ENCODE measurements at regions of chr1 and their contacts with region 1.

Region 1: GRCh38 chr1:23916209-23917131 is 3.3 kb upstream of the CNR2 start:
- DNase-seq: no peak
- ATAC-seq: peak; percentile 56 to 78 (median 68)
- H3K4me3 ChIP-seq: no peak overlapping the region
- H3K27ac ChIP-seq: no peak overlapping the region
- H3K4me1 ChIP-seq: peaks cover 7% of the 10 kb centered on the region
- H3K27me3 ChIP-seq: no peaks in the 10 kb centered on the region
- CTCF ChIP-seq: peak; percentile 55

Region 2: DNA sequence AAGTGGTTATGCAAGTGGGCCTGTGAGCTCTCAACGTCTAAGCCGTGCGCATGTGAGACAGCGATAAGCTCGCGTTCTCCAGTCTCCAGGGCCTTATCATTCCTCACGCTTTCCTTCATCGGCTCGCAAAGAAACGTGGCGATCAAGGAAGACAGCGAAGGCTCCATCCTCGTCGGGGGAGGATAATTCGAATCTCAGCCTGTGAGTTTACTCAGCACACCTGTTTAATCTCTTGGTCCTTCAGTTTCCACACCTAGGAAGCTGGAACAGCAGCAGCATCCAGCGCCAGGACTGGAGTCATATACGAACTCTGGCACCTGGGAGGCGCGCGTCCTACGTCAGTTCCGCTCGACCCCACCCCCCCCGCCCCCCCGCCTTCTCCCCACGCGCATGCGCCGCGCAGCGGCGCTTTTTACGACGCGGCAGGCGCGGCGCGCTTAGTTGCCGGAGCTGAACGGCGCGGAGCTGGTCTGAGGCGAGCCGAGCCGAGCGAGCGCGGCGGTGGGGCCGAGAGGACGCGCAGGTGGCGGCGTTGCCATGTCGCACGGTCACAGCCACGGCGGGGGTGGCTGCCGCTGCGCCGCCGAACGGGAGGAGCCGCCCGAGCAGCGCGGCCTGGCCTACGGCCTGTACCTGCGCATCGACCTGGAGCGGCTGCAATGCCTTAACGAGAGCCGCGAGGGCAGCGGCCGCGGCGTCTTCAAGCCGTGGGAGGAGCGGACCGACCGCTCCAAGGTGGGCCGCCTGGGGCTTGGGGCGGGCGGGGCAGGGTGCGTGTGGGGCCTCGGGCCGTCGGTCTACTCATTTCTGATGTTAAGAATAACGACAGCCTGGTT is 138.3 kb before region 1 on chr1 and contains the start of gene PITHD1:
- intact Hi-C with region 1: loop called in 1 of 2 experiments (anchors 5 kb)
- DNase-seq: peak; percentile 81 to 91
- ATAC-seq: peak; percentile 88 to 93 (median 92)
- H3K4me3 ChIP-seq: peak within 1 kb of the TSS; percentile 78
- H3K27ac ChIP-seq: peak within 1 kb of the TSS; percentile 92
- H3K4me1 ChIP-seq: peaks cover 33% of the 10 kb centered on the region
- H3K27me3 ChIP-seq: no peaks in the 10 kb centered on the region
- CTCF ChIP-seq: no peak
- total RNA-seq, gene PITHD1: 53.4 to 72.1 (median 63.4) TPM

Region 3: DNA sequence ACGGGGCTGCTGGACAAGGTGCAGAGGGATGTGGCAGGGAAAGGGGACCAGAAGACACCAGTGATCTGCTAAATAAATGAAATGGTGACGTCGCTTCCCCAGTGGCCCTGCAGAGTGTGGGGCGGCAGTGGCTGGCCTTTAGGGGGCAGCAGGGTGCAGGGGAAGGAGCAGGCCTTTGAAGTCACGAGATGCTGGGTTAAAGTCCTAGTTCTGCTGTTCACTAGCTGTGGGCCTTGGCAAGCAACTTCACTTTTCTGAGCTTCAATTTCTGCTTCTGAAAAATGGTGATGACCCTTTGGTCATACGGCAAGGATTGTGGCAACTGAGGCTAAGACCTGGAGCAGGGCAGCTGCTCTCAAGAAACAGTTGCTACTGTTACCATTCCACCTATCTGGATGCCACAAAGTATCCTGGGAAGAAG is 106.7 kb before region 1 on chr1:
- intact Hi-C with region 1: loop called in 1 of 2 experiments (anchors 5 kb)
- DNase-seq: peak; percentile 76 to 87
- ATAC-seq: peak; percentile 88 to 97 (median 90)
- H3K4me3 ChIP-seq: no peak overlapping the region
- H3K27ac ChIP-seq: no peak overlapping the region
- H3K4me1 ChIP-seq: no peaks in the 10 kb centered on the region
- H3K27me3 ChIP-seq: no peaks in the 10 kb centered on the region
- CTCF ChIP-seq: peak; percentile 78

Region 4: GRCh38 chr1:23936481-23937176 is 20.2 kb after region 1 on chr1:
- intact Hi-C with region 1: no loop called
- DNase-seq: no peak
- ATAC-seq: no peak
- H3K4me3 ChIP-seq: no peak overlapping the region
- H3K27ac ChIP-seq: no peak overlapping the region
- H3K4me1 ChIP-seq: no peaks in the 10 kb centered on the region
- H3K27me3 ChIP-seq: no peaks in the 10 kb centered on the region
- CTCF ChIP-seq: no peak

Region 5: DNA sequence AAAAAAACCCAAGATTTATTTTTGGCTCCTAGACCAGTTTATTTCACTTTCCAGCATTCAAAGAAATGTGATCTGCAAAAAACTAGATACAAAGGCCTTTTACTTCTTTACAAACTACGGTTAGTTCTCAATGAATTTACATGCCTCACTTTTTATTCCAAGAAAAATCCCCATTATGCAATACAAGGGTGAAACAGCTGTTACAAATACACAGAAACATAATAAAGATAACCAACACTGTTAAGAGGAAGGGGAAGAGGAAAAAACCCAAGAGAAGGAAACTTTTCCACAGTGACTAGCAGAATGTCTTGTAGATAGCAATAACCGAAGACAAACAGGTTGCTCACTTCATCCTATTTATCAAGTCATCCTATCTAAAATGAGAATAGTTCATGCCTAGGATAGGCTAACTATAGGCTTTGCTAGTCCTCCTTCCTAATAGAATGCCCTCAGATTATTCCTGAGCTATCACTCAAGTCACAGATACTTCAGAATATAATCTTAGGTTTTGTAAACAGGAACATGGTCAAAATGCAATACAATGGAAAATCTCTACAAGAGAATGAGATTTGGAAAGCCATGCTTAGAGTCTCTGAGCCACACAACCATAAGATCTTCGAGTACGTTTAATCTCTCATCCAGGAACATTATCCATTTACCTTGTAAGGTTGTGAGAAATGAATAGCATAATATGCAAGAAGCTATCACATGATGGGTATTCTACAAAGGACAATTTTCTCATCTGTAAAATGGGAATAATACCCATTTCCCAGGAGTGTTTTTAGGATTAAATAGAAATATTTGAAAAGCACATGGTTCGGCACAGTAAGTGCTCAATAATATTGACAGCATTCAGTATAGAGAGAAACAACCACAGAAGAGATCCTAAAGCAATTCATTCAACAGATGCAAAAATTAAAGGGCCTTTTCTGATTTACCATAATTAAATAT is 48.6 kb after region 1 on chr1:
- intact Hi-C with region 1: no loop called
- DNase-seq: no peak
- ATAC-seq: no peak
- H3K4me3 ChIP-seq: no peak overlapping the region
- H3K27ac ChIP-seq: peak overlapping the region; percentile 42
- H3K4me1 ChIP-seq: peaks cover 25% of the 10 kb centered on the region
- H3K27me3 ChIP-seq: no peaks in the 10 kb centered on the region
- CTCF ChIP-seq: no peak